CD14-positive monocyte (primary cell): ENCODE measurements at regions of chr9 and their contacts with region 1.

Region 1: DNA sequence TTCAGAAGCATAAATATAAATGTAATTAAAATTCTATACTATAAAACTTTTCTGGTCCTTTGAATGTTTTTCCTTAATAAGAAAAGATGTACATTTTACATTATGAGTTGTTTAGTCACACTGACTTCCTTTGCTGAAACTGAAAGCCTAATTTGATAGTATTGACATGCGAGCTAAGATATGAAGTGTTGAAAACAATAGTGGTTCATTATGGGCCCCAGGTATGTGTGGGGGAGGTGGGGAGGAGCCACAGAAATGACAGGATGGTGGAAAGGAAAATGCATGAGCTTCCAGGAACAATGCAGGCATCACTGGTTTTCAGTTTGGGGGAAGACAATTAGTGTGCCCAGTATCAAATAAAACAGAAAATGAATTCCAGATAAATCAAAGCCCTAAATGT is 35.4 kb upstream of the RLN1 start:
- DNase-seq: no peak
- H3K4me3 ChIP-seq: no peak overlapping the region
- H3K4me3 Mint-ChIP-seq: no peak overlapping the region
- H3K27ac ChIP-seq: no peak overlapping the region
- H3K27ac Mint-ChIP-seq: no peak overlapping the region
- H3K4me1 ChIP-seq: no peaks in the 10 kb centered on the region
- H3K4me1 Mint-ChIP-seq: peaks cover 5% of the 10 kb centered on the region
- H3K27me3 ChIP-seq: no peaks in the 10 kb centered on the region
- H3K27me3 Mint-ChIP-seq: no peaks in the 10 kb centered on the region
- CTCF ChIP-seq: no peak

Region 2: DNA sequence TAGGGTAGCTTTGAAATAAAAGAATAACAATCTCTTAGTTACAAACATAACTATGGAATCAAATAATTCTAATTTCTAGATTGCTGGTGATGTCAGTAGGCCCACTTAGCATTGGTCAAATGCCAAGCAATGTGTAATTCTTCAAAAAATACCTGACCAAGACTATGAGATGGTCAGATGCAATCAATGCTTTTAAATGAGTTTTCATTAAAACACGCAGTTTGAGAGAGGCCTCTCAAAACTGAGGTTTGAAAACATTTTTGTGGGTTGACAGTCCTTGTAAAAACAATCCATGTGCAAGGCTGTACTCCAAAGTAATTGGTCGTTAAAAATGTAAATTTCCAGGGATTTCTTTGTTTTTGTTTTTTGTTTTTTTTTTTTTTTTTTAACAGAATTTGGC is 69.3 kb before region 1 on chr9:
- intact Hi-C with region 1: no loop called
- DNase-seq: no peak
- H3K4me3 ChIP-seq: no peak overlapping the region
- H3K4me3 Mint-ChIP-seq: no peak overlapping the region
- H3K27ac ChIP-seq: no peak overlapping the region
- H3K27ac Mint-ChIP-seq: no peak overlapping the region
- H3K4me1 ChIP-seq: peaks cover 0 to 5% of the 10 kb centered on the region in 2 donors
- H3K4me1 Mint-ChIP-seq: peaks cover 7% of the 10 kb centered on the region
- H3K27me3 ChIP-seq: peaks cover 2 to 9% of the 10 kb centered on the region in 2 donors
- H3K27me3 Mint-ChIP-seq: peaks cover 13 to 22% (median 15%) of the 10 kb centered on the region in 3 donors
- CTCF ChIP-seq: no peak

Region 3: GRCh38 chr9:5326893-5327548 is 48.1 kb before region 1 on chr9:
- intact Hi-C with region 1: loop called in 1 of 2 experiments (anchors 10 kb)
- DNase-seq: no peak
- H3K4me3 ChIP-seq: no peak overlapping the region
- H3K4me3 Mint-ChIP-seq: no peak overlapping the region
- H3K27ac ChIP-seq: no peak overlapping the region
- H3K27ac Mint-ChIP-seq: no peak overlapping the region
- H3K4me1 ChIP-seq: no peaks in the 10 kb centered on the region
- H3K4me1 Mint-ChIP-seq: peaks cover 2% of the 10 kb centered on the region
- H3K27me3 ChIP-seq: no peaks in the 10 kb centered on the region
- H3K27me3 Mint-ChIP-seq: peaks cover 0 to 4% (median 0%) of the 10 kb centered on the region in 3 donors
- CTCF ChIP-seq: no peak

Region 4: GRCh38 chr9:5450359-5451091 is 75.4 kb after region 1 on chr9 and contains the start of gene CD274:
- intact Hi-C with region 1: no loop called
- DNase-seq: peak; percentile 65 to 91 (median 66)
- H3K4me3 ChIP-seq: peak within 1 kb of the TSS; percentile 76 to 94 (median 82)
- H3K4me3 Mint-ChIP-seq: peak within 1 kb of the TSS; percentile 81 to 93
- H3K27ac ChIP-seq: peak within 1 kb of the TSS; percentile 59 to 85
- H3K27ac Mint-ChIP-seq: peak within 1 kb of the TSS; percentile 87 to 93 (median 89)
- H3K4me1 ChIP-seq: peaks cover 39 to 47% of the 10 kb centered on the region in 2 donors
- H3K4me1 Mint-ChIP-seq: peaks cover 39% of the 10 kb centered on the region
- H3K27me3 ChIP-seq: no peaks in the 10 kb centered on the region
- H3K27me3 Mint-ChIP-seq: peaks cover 0 to 3% (median 0%) of the 10 kb centered on the region in 3 donors
- CTCF ChIP-seq: peak; percentile 62
- polyA plus RNA-seq, gene CD274: 0.24 to 0.84 TPM in 2 of 3 donors, not detected in the other